MCF 10A (cell line): ENCODE measurements at regions of chr14 and their contacts with region 1.

Region 1: DNA sequence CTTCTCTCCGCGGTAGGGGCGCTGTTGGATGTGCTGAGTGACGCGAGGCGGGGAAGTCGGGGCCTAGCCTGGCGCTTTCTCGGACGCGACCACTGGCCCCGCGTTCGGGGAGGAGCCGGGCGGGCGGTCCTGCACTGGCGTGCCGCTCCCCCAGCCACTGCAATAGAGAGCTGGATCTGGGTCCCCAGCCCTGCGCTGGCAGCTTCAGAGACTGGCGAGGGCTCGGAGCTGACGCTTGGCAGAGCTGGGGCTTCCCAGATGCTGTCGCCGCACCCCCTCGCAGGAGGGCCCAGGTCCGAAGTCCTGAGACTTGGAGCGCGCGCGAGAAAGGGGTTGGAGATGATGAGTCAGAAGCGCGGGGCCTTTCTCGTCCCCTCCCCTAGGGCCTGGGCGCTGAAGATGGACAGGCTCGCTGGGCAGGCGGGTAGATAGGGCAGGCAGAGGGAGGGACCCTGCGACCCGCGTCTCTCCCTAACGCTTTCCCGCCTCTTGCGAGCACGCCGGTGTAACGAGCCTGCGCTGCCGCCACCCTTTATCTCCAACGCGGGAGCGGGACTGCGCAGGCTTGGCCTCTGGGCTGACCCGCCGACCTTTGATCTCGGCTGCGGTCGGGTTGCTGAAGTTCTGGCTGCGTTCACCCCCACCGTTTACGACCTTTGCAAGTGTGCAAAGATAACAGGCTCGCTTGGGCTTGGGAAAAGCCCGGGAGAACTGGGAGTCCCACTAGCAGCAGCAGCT is 3.0 kb downstream of the TMEM253 start:
- DNase-seq: peak; percentile 98
- H3K4me3 Mint-ChIP-seq: peak overlapping the region; percentile 84
- H3K27ac Mint-ChIP-seq: peak overlapping the region; percentile 67
- H3K4me1 Mint-ChIP-seq: peaks cover 52% of the 10 kb centered on the region
- H3K27me3 Mint-ChIP-seq: no peaks in the 10 kb centered on the region
- CTCF ChIP-seq: peak; percentile 58

Region 2: GRCh38 chr14:20682435-20683124 is 421.3 kb before region 1 on chr14:
- CTCF ChIA-PET with region 1: interaction called, 4 read pairs
- POLR2A ChIA-PET with region 1: interaction called, 4 read pairs
- intact Hi-C with region 1: loop called (anchors 5 kb)
- DNase-seq: peak; percentile 92
- H3K4me3 Mint-ChIP-seq: no peak overlapping the region
- H3K27ac Mint-ChIP-seq: no peak overlapping the region
- H3K4me1 Mint-ChIP-seq: peaks cover 27% of the 10 kb centered on the region
- H3K27me3 Mint-ChIP-seq: no peaks in the 10 kb centered on the region
- CTCF ChIP-seq: no peak

Region 3: GRCh38 chr14:20982646-20983369 is 121.1 kb before region 1 on chr14:
- CTCF ChIA-PET with region 1: interaction called, 10 read pairs
- POLR2A ChIA-PET with region 1: no interaction called
- intact Hi-C with region 1: no loop called
- DNase-seq: no peak
- H3K4me3 Mint-ChIP-seq: no peak overlapping the region
- H3K27ac Mint-ChIP-seq: no peak overlapping the region
- H3K4me1 Mint-ChIP-seq: peaks cover 18% of the 10 kb centered on the region
- H3K27me3 Mint-ChIP-seq: no peaks in the 10 kb centered on the region
- CTCF ChIP-seq: no peak

Region 4: GRCh38 chr14:21014761-21015190 is 89.1 kb before region 1 on chr14:
- CTCF ChIA-PET with region 1: interaction called, 248 read pairs
- POLR2A ChIA-PET with region 1: interaction called, 44 read pairs
- intact Hi-C with region 1: loop called (anchors 1 kb)
- DNase-seq: peak; percentile 88
- H3K4me3 Mint-ChIP-seq: no peak overlapping the region
- H3K27ac Mint-ChIP-seq: no peak overlapping the region
- H3K4me1 Mint-ChIP-seq: peaks cover 7% of the 10 kb centered on the region
- H3K27me3 Mint-ChIP-seq: peaks cover 33% of the 10 kb centered on the region
- CTCF ChIP-seq: peak; percentile 90

Region 5: DNA sequence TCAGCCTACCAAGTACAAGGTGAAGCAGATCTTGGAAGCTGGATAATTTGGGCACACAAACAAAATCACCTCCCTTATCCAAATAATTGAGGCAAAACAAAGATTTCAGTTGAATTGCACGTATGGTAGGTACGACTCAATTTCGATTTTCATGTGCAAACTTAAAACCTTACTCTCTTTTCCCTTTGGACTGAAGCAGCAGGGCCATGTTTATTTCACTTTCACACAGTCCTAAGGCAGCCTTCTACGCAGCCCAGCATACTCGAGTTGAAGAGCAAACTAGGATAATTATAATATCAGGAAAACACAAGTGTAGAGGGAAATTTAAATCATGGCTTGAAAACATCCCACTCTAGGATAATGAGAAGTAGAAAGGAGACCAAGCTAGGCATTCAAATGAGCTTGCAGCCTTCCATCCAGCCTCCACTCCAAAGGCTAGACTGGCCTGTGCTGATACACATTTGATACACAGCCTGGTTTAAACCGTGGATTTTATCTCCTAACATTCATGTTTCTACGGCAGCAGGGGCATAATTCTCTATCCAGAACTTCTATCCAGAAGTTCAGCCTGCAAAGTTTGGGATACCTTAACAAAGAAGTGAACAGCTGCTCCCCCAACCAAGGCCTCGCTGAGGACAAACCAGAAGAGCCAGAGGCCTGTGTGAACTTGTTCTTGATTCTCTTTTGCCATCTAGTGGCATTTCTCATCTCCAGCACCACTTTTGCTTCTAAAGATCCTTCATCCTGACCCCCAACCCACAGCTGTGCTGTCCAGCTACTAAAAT is 64.1 kb before region 1 on chr14:
- CTCF ChIA-PET with region 1: interaction called, 52 read pairs
- POLR2A ChIA-PET with region 1: interaction called, 15 read pairs
- intact Hi-C with region 1: no loop called
- DNase-seq: peak; percentile 69
- H3K4me3 Mint-ChIP-seq: no peak overlapping the region
- H3K27ac Mint-ChIP-seq: no peak overlapping the region
- H3K4me1 Mint-ChIP-seq: peaks cover 34% of the 10 kb centered on the region
- H3K27me3 Mint-ChIP-seq: no peaks in the 10 kb centered on the region
- CTCF ChIP-seq: peak; percentile 51

Region 6: GRCh38 chr14:21063479-21063878 is 40.4 kb before region 1 on chr14:
- CTCF ChIA-PET with region 1: interaction called, 127 read pairs
- POLR2A ChIA-PET with region 1: interaction called, 14 read pairs
- intact Hi-C with region 1: loop called (anchors 1 kb)
- DNase-seq: peak; percentile 31
- H3K4me3 Mint-ChIP-seq: no peak overlapping the region
- H3K27ac Mint-ChIP-seq: no peak overlapping the region
- H3K4me1 Mint-ChIP-seq: peaks cover 7% of the 10 kb centered on the region
- H3K27me3 Mint-ChIP-seq: peaks cover 11% of the 10 kb centered on the region
- CTCF ChIP-seq: no peak

Region 7: DNA sequence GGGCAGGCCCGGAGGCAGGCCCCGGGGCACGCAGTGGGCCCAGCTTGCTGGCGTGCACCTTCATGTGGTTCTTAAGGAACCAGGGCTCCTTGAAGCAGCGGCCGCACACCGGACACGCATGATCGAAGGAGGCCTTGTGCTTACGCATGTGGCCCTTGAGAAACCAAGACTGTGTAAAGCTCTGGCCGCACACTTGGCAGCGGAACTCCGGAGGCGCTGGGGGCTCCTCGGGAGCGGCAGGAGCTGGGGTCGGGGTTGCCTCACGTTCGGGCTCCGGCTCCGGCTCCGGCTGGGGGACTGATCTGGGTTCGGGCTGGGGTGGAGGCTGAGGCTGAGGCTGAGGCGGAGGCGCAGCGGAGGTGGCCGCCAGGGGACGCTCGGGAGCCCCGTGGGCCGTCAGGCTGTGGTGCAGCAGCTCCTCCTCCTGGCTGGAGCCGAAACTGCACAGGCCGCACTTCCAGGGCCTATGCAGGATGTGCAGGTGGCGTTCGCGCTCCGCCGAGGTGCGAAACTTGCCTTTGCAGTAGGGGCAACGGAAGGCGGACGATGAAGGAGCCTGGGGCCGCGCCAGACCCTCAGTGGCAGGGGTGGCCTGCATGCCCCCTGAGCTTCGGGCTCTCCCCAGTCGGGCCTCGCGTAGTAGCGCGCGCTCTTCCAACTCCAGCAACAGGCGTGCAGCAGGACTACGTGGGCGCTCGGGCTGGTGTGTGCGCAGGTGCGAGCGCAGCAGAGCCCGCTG is 11.4 kb before region 1 on chr14:
- CTCF ChIA-PET with region 1: interaction called, 241 read pairs
- POLR2A ChIA-PET with region 1: interaction called, 37 read pairs
- intact Hi-C with region 1: loop called (anchors 1 kb)
- DNase-seq: peak; percentile 64
- H3K4me3 Mint-ChIP-seq: peak overlapping the region; percentile 19
- H3K27ac Mint-ChIP-seq: no peak overlapping the region
- H3K4me1 Mint-ChIP-seq: peaks cover 24% of the 10 kb centered on the region
- H3K27me3 Mint-ChIP-seq: no peaks in the 10 kb centered on the region
- CTCF ChIP-seq: peak; percentile 100

Region 8: GRCh38 chr14:21233457-21234076 is 129.7 kb after region 1 on chr14:
- CTCF ChIA-PET with region 1: no interaction called
- POLR2A ChIA-PET with region 1: no interaction called
- intact Hi-C with region 1: no loop called
- DNase-seq: peak; percentile 43
- H3K4me3 Mint-ChIP-seq: no peak overlapping the region
- H3K27ac Mint-ChIP-seq: no peak overlapping the region
- H3K4me1 Mint-ChIP-seq: peaks cover 36% of the 10 kb centered on the region
- H3K27me3 Mint-ChIP-seq: no peaks in the 10 kb centered on the region
- CTCF ChIP-seq: no peak

Region 9: GRCh38 chr14:21343035-21343794 is 239.3 kb after region 1 on chr14:
- CTCF ChIA-PET with region 1: no interaction called
- POLR2A ChIA-PET with region 1: no interaction called
- intact Hi-C with region 1: no loop called
- DNase-seq: no peak
- H3K4me3 Mint-ChIP-seq: no peak overlapping the region
- H3K27ac Mint-ChIP-seq: no peak overlapping the region
- H3K4me1 Mint-ChIP-seq: no peaks in the 10 kb centered on the region
- H3K27me3 Mint-ChIP-seq: no peaks in the 10 kb centered on the region
- CTCF ChIP-seq: no peak